ENCODE measurements at regions of chr16 and their contacts with region 1.

Region 1: GRCh38 chr16:57194512-57194911 is 8.4 kb downstream of the RSPRY1 start:
- DNase-seq: peak; percentile 80
- H3K4me3 ChIP-seq: peak overlapping the region in 2 of 3 experiments; percentile 8 to 20
- H3K27ac ChIP-seq: peak overlapping the region; percentile 93
- H3K4me1 ChIP-seq: peaks cover 49% of the 10 kb centered on the region
- H3K27me3 ChIP-seq: no peaks in the 10 kb centered on the region
- CTCF ChIP-seq: no peak

Region 2: GRCh38 chr16:56450986-56451752 is 743.3 kb before region 1 on chr16 and contains the starts of genes NUDT21 and OGFOD1:
- CTCF ChIA-PET with region 1: no interaction called
- dilution Hi-C with region 1: no loop called
- in situ Hi-C with region 1: no loop called
- intact Hi-C with region 1: no loop called
- DNase-seq: peak; percentile 98
- H3K4me3 ChIP-seq: peak within 1 kb of the TSS; percentile 84 to 98 (median 88)
- H3K27ac ChIP-seq: peak within 1 kb of the TSS; percentile 67
- H3K4me1 ChIP-seq: peaks cover 13% of the 10 kb centered on the region
- H3K27me3 ChIP-seq: no peaks in the 10 kb centered on the region
- CTCF ChIP-seq: no peak
- total RNA-seq, gene NUDT21: 57.7 to 109 TPM
- total RNA-seq, gene OGFOD1: 84.3 to 110 TPM

Region 3: GRCh38 chr16:57213462-57213861 is 18.9 kb after region 1 on chr16:
- CTCF ChIA-PET with region 1: no interaction called
- dilution Hi-C with region 1: no loop called
- in situ Hi-C with region 1: no loop called
- intact Hi-C with region 1: loop called (anchors 2 kb)
- DNase-seq: peak; percentile 79
- H3K4me3 ChIP-seq: no peak overlapping the region
- H3K27ac ChIP-seq: peak overlapping the region; percentile 71
- H3K4me1 ChIP-seq: peaks cover 18% of the 10 kb centered on the region
- H3K27me3 ChIP-seq: no peaks in the 10 kb centered on the region
- CTCF ChIP-seq: no peak

Region 4: DNA sequence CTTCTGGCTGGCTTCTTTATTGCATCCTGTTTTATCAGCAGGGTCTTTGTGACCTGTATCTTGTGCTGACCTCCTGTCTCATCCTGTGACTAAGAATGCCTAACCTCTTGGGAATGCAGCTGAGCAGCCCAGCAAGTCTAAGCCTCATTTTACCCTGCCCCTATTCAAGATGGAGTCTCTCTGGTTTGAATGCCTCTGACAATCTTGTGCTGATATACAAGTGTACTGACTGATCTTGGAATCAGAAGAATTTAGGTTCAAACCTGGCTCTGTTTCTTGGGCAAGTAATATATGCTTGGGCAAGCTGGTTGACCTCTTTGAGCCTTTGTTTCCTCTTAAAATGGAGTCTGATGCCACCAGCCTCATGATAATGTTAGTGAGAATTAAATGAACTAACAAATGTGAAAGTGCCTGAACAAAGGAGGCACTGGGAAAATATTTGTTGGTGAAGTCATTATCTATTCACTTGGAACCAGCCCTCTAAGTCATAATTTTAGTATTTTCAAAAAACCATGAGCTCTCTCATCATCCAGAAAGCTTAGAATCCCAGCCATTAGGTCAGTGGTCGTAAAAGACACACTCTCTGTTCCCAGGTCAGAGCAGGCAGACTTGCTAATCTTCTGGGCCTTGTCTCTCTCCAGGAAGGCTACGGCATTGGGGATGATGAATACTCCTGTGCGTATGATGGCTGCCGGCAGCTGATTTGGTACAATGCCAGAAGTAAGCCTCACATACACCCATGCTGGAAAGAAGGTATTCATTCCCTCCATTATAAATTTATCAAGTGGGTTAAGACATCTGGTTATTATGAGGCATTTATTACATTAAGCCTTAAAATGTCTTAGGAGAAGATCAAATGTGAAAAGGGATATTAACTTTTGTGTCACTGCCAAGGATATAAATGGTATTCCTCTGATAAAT is 32.4 kb after region 1 on chr16:
- CTCF ChIA-PET with region 1: no interaction called
- dilution Hi-C with region 1: loop called (anchors 5 kb)
- in situ Hi-C with region 1: no loop called
- intact Hi-C with region 1: loop called (anchors 5 kb)
- DNase-seq: no peak
- H3K4me3 ChIP-seq: no peak overlapping the region
- H3K27ac ChIP-seq: peak overlapping the region; percentile 19
- H3K4me1 ChIP-seq: peaks cover 7% of the 10 kb centered on the region
- H3K27me3 ChIP-seq: no peaks in the 10 kb centered on the region
- CTCF ChIP-seq: no peak

Region 5: GRCh38 chr16:57409870-57410585 is 215.5 kb after region 1 on chr16:
- CTCF ChIA-PET with region 1: no interaction called
- dilution Hi-C with region 1: no loop called
- in situ Hi-C with region 1: no loop called
- intact Hi-C with region 1: no loop called
- DNase-seq: no peak
- H3K4me3 ChIP-seq: no peak overlapping the region
- H3K27ac ChIP-seq: no peak overlapping the region
- H3K4me1 ChIP-seq: peaks cover 6% of the 10 kb centered on the region
- H3K27me3 ChIP-seq: no peaks in the 10 kb centered on the region
- CTCF ChIP-seq: no peak

Measured in mammary epithelial cell (primary cell).